Spleen (tissue), 13 donors: ENCODE measurements at regions of chr17 and their contacts with region 1.

Region 1: GRCh38 chr17:5055543-5055942 is 20.3 kb upstream of the SLC52A1 start:
- DNase-seq: no peak
- H3K4me3 ChIP-seq: no peak overlapping the region
- H3K27ac ChIP-seq: no peak overlapping the region
- H3K4me1 ChIP-seq: peaks cover 0 to 1% (median 0%) of the 10 kb centered on the region in 6 donors
- H3K27me3 ChIP-seq: peaks cover 0 to 15% (median 0%) of the 10 kb centered on the region in 7 donors
- CTCF ChIP-seq: no peak
- POLR2A ChIP-seq: no peak

Region 2: DNA sequence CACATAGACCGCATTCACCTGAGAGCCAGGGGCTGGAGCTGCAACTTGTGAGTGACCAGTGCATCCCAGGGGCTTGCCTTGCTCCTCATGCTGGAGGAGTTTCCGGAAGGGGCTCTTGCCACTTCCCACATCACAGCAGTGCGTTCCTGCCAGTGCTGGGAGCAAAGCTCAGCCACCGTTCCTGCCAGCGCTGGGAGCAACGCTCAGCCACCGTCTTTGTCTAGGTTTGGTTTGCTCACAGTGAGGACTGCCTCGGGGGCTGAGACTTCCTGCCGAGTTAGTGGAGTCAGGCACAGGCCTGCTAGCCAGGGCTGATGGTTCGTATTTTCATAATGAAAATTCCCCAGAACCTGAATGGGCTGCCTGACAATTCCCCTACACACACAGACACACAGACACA is 147.2 kb before region 1 on chr17:
- intact Hi-C with region 1: loop called (anchors 5 kb)
- DNase-seq: no peak
- H3K4me3 ChIP-seq: no peak overlapping the region
- H3K27ac ChIP-seq: peak overlapping the region in 5 of 8 donors; percentile 23 to 68 (median 43)
- H3K4me1 ChIP-seq: peaks cover 3 to 24% (median 14%) of the 10 kb centered on the region in 6 donors
- H3K27me3 ChIP-seq: peaks cover 0 to 6% (median 0%) of the 10 kb centered on the region in 7 donors
- CTCF ChIP-seq: no peak
- POLR2A ChIP-seq: no peak

Region 3: DNA sequence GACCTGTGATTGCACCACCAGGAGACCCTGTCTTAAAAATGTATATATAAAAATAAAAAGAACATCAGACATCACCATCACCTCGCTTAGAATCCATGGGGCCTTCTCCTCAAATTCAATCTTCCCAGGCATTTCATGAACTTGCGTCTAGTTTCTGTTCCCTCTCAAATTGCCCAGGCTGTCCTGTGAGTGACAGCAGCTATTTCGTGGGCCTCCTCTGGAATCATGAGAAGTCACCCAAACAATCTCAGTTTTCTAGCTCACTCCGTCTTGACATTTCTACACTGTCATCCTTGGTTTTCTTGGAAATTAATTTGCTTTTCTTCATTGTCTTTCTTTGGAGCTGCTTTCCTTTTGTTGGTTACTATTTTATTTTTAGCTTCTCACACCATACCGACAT is 27.6 kb before region 1 on chr17:
- intact Hi-C with region 1: loop called (anchors 5 kb)
- DNase-seq: no peak
- H3K4me3 ChIP-seq: no peak overlapping the region
- H3K27ac ChIP-seq: no peak overlapping the region
- H3K4me1 ChIP-seq: peaks cover 7 to 35% (median 20%) of the 10 kb centered on the region in 6 donors
- H3K27me3 ChIP-seq: no peaks in the 10 kb centered on the region
- CTCF ChIP-seq: no peak
- POLR2A ChIP-seq: no peak